ENCODE measurements at regions of chr9 and their contacts with region 1.

Region 1: DNA sequence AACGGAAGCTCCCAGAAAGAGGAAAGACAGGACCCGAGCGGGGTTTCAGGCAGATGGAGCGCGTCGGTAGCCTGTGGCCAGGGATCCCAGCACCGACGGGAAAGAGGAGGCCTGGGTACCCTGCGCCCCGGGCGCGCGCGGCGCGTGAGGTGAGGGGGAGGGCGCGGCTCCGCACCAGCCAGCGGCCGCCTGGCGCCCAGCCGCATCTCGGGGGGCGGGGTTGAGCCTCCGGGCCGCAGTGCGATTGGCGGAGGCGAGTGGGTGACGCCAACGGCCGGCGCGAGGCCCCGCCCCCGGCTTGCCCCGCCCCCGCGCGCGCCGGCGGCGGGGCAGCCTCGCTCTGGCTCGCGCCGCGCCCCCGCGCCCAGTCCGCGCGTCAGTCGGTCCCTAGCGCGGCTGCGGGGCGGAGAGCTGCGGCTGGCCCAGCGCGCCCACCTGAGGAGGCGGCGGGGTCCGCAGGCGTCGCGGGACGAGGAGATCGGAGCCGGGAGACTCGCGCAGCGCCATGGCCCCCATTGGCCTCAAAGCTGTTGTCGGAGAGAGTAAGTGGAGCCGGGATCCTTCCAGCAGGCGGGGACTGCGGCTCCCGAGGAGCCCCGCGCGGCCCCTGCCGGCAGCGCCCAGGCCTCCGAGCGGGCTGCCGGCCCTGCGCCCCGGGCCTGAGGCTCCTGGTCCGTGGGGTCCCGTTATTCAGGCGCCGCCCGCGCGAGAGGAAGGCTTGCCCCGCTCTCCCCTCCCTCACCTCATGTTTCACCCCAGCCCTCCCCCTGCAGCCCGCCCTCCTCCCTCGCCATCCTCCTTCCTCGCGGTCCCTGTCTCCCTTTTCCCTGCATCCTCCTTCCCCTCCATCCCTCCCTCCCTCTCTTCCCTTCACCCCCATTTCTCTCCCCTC is at the start of gene STXBP1:
- DNase-seq: peak; percentile 88 to 93
- ATAC-seq: peak; percentile 84 to 92 (median 88)
- H3K4me3 ChIP-seq: peak within 1 kb of the TSS; percentile 65 to 98 (median 88)
- H3K27ac ChIP-seq: peak within 1 kb of the TSS; percentile 86 to 98 (median 94)
- H3K4me1 ChIP-seq: peaks cover 0 to 52% (median 32%) of the 10 kb centered on the region in 9 donors
- H3K27me3 ChIP-seq: peaks cover 0 to 35% (median 0%) of the 10 kb centered on the region in 7 donors
- CTCF ChIP-seq: peak in 4 of 9 donors; percentile 6 to 45 (median 30)
- total RNA-seq, gene STXBP1: 36.8 to 59.2 (median 49.4) TPM

Region 2: GRCh38 chr9:127633216-127633862 is 21.2 kb after region 1 on chr9:
- intact Hi-C with region 1: loop called in 1 of 10 experiments (anchors 1 kb)
- DNase-seq: no peak
- ATAC-seq: no peak
- H3K4me3 ChIP-seq: peak overlapping the region in 2 of 10 donors; percentile 6 to 12
- H3K27ac ChIP-seq: peak overlapping the region in 9 of 10 donors; percentile 28 to 87 (median 68)
- H3K4me1 ChIP-seq: peaks cover 14 to 92% (median 50%) of the 10 kb centered on the region in 9 donors
- H3K27me3 ChIP-seq: no peaks in the 10 kb centered on the region
- CTCF ChIP-seq: no peak

Region 3: GRCh38 chr9:127664667-127665507 is 52.7 kb after region 1 on chr9:
- intact Hi-C with region 1: loop called in 1 of 10 experiments (anchors 10 kb)
- DNase-seq: no peak
- ATAC-seq: peak in 7 of 8 donors; percentile 19 to 70 (median 47)
- H3K4me3 ChIP-seq: no peak overlapping the region
- H3K27ac ChIP-seq: peak overlapping the region in 4 of 10 donors; percentile 6 to 60 (median 14)
- H3K4me1 ChIP-seq: peaks cover 0 to 16% (median 0%) of the 10 kb centered on the region in 9 donors
- H3K27me3 ChIP-seq: no peaks in the 10 kb centered on the region
- CTCF ChIP-seq: no peak

Region 4: GRCh38 chr9:127715394-127716337 is 103.5 kb after region 1 on chr9 and contains the starts of genes PTRH1 and TTC16:
- intact Hi-C with region 1: loop called in 3 of 10 experiments (anchors 5 kb)
- DNase-seq: peak; percentile 97 to 98
- ATAC-seq: peak; percentile 95 to 98 (median 96)
- H3K4me3 ChIP-seq: peak within 1 kb of the TSS; percentile 52 to 95 (median 82)
- H3K27ac ChIP-seq: peak within 1 kb of the TSS; percentile 4 to 91 (median 84)
- H3K4me1 ChIP-seq: peaks cover 5 to 23% (median 18%) of the 10 kb centered on the region in 9 donors
- H3K27me3 ChIP-seq: no peaks in the 10 kb centered on the region
- CTCF ChIP-seq: no peak
- total RNA-seq, gene PTRH1: 8.1 to 14.1 (median 11.5) TPM
- total RNA-seq, gene TTC16: 0.04 to 0.61 (median 0.32) TPM in 9 of 10 donors, not detected in the other

Measured in heart right ventricle (tissue), 16 donors.